AG04450 (cell line): ENCODE measurements at regions of chr20 and their contacts with region 1.

Region 1: DNA sequence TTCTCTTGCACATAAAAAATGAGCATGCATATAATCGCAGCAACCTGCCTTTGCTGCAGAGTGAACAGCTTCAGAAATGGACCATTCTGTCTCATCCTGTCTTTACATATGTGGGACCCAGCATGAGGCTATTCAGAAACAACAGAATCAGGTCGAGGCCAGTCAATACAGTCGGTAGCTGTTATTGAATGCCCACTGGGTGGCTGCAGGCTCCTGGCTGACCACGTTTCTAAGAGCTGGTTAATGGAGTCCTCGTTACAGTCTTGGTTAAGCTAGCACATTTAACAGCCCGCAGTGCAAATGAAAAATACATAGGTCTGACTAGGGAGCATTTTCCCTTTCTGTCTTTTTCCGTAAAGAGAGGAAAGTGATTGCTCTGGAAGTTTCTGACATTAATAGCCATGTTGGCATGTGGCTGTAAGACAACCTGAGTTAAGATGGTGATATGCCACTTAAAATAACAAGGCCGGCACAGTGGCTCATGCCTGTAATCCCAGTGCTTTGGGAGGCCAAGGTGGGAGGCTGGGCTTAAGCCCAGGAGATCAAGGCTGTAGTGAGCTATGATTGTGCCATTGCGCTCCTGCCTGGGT is 75.0 kb downstream of the SHLD1 start:
- DNase-seq: no peak
- H3K4me3 ChIP-seq: no peak overlapping the region
- H3K27ac ChIP-seq: no peak overlapping the region
- H3K27me3 ChIP-seq: no peaks in the 10 kb centered on the region
- CTCF ChIP-seq: no peak

Region 2: DNA sequence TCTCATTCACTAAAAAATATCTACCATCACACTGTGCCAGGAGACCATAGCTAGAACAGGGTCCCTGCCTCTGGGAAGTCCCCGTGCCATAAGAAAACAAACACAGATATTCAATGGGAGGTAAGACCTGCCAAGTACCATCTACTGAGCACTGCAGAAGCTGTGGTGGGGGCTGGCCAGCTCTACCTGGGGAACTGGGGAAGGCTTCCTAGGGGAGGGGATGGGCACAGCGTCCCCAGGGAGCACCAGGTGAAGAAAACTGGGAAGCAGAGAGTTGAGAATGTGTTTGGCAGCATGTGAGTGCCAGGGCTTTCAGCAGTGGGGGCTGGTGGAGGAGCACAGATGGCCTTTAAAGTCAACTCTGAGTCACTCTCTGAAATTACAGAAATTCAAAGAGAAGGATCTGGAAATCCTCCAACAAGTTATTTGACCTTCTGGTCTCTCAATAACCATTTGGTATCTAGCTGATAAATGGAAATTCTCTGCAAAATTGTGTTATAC is 10.1 kb after region 1 on chr20:
- CTCF ChIA-PET with region 1: interaction called, 10 read pairs
- POLR2A ChIA-PET with region 1: no interaction called
- DNase-seq: no peak
- H3K4me3 ChIP-seq: no peak overlapping the region
- H3K27ac ChIP-seq: no peak overlapping the region
- H3K27me3 ChIP-seq: no peaks in the 10 kb centered on the region
- CTCF ChIP-seq: no peak

Region 3: DNA sequence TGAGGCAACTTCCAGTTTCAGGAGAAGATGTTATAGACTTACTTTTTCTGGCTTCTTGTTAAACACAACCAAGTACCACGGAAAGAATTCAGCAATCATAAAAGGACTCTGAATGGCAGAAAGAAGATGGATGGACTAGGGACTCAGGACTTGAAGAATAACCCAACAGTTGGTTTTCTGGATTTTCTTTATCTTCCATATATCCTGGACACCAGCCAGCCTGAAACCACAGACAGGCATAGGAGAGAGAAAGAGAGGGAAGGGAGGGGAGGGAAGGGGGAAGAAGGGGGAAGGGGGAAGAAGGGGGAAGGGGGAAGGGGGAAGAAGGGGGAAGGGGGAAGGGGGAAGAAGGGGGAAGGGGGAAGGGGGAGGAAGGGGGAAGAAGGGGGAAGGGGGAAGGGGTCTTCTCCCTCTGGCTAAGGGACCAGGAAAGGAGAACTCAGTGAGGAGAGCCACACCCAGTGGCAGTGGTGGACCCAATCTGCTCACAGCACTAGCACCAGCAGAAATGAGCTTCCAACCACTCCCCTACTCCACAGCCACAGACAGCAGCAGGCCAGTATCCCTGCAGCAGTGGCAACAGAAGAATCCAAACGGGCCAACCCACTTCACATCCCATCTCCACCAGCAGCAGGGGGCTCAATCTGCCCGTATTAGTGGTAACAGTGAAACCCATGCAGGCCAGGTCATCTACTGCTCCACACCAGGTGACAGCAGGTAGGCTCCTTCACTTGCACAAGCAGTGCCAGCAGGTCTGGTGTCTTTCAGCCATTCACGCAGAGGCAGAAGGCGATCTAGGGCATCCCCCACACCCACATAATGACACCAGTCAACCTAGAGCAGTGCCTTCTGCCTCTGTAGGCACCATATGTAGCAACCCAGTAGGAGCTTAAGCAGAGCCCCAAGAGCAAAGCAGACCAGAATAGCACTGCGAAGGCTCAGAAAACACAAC is 46.5 kb after region 1 on chr20:
- CTCF ChIA-PET with region 1: no interaction called
- POLR2A ChIA-PET with region 1: no interaction called
- DNase-seq: no peak
- H3K4me3 ChIP-seq: no peak overlapping the region
- H3K27ac ChIP-seq: no peak overlapping the region
- H3K27me3 ChIP-seq: peaks cover 12% of the 10 kb centered on the region
- CTCF ChIP-seq: no peak